Heart left ventricle (tissue), 16 donors: ENCODE measurements at regions of chr3 and their contacts with region 1.

Region 1: GRCh38 chr3:3200632-3201212 is 21.2 kb upstream of the CRBN start:
- DNase-seq: peak in 3 of 5 donors; percentile 19 to 53 (median 36)
- ATAC-seq: peak in 2 of 4 donors; percentile 59 to 80
- H3K4me3 ChIP-seq: no peak overlapping the region
- H3K27ac ChIP-seq: no peak overlapping the region
- H3K4me1 ChIP-seq: no peaks in the 10 kb centered on the region
- H3K27me3 ChIP-seq: peaks cover 0 to 8% (median 0%) of the 10 kb centered on the region in 9 donors
- CTCF ChIP-seq: peak; percentile 47 to 88 (median 73)
- POLR2A ChIP-seq: no peak

Region 2: GRCh38 chr3:2543247-2543646 is 657.5 kb before region 1 on chr3:
- intact Hi-C with region 1: no loop called
- DNase-seq: no peak
- ATAC-seq: no peak
- H3K4me3 ChIP-seq: no peak overlapping the region
- H3K27ac ChIP-seq: no peak overlapping the region
- H3K4me1 ChIP-seq: no peaks in the 10 kb centered on the region
- H3K27me3 ChIP-seq: no peaks in the 10 kb centered on the region
- CTCF ChIP-seq: no peak
- POLR2A ChIP-seq: no peak

Region 3: GRCh38 chr3:3998140-3998922 is 797.6 kb after region 1 on chr3:
- intact Hi-C with region 1: loop called (anchors 2 to 10 kb)
- DNase-seq: no peak
- ATAC-seq: no peak
- H3K4me3 ChIP-seq: no peak overlapping the region
- H3K27ac ChIP-seq: no peak overlapping the region
- H3K4me1 ChIP-seq: no peaks in the 10 kb centered on the region
- H3K27me3 ChIP-seq: no peaks in the 10 kb centered on the region
- CTCF ChIP-seq: peak; percentile 18 to 50 (median 42)
- POLR2A ChIP-seq: no peak

Region 4: DNA sequence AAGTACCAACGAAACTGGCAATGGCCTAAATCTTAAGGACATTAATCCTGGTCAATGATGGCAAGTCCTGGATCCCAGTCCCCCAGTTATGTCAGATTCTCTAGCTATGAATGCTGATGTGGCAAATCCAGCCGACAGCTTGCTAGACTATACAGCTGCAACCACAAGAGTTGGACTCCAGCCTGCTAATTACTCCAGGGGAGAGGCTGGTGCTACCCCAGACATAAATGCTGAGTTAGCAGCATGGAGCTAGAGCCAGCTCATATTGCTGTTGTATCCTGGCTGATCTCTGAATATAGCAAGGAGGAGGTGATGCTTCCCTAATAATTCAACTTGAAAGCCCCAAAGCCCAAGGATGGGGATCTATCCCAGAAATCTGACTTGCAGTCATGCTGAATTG is 805.6 kb after region 1 on chr3:
- intact Hi-C with region 1: loop called in 2 of 10 experiments (anchors 10 kb)
- DNase-seq: no peak
- ATAC-seq: no peak
- H3K4me3 ChIP-seq: no peak overlapping the region
- H3K27ac ChIP-seq: no peak overlapping the region
- H3K4me1 ChIP-seq: no peaks in the 10 kb centered on the region
- H3K27me3 ChIP-seq: no peaks in the 10 kb centered on the region
- CTCF ChIP-seq: no peak
- POLR2A ChIP-seq: no peak

Region 5: GRCh38 chr3:4271834-4272233 is 1071.1 kb after region 1 on chr3:
- intact Hi-C with region 1: loop called in 5 of 10 experiments (anchors 5 kb)
- DNase-seq: no peak
- ATAC-seq: no peak
- H3K4me3 ChIP-seq: no peak overlapping the region
- H3K27ac ChIP-seq: no peak overlapping the region
- H3K4me1 ChIP-seq: peaks cover 0 to 16% (median 0%) of the 10 kb centered on the region in 12 donors
- H3K27me3 ChIP-seq: no peaks in the 10 kb centered on the region
- CTCF ChIP-seq: peak in 11 of 12 donors; percentile 13 to 58 (median 39)
- POLR2A ChIP-seq: no peak

Region 6: GRCh38 chr3:4284865-4285264 is 1084.1 kb after region 1 on chr3:
- intact Hi-C with region 1: loop called (anchors 1 to 5 kb)
- DNase-seq: no peak
- ATAC-seq: no peak
- H3K4me3 ChIP-seq: no peak overlapping the region
- H3K27ac ChIP-seq: no peak overlapping the region
- H3K4me1 ChIP-seq: no peaks in the 10 kb centered on the region
- H3K27me3 ChIP-seq: no peaks in the 10 kb centered on the region
- CTCF ChIP-seq: no peak
- POLR2A ChIP-seq: no peak

Region 7: DNA sequence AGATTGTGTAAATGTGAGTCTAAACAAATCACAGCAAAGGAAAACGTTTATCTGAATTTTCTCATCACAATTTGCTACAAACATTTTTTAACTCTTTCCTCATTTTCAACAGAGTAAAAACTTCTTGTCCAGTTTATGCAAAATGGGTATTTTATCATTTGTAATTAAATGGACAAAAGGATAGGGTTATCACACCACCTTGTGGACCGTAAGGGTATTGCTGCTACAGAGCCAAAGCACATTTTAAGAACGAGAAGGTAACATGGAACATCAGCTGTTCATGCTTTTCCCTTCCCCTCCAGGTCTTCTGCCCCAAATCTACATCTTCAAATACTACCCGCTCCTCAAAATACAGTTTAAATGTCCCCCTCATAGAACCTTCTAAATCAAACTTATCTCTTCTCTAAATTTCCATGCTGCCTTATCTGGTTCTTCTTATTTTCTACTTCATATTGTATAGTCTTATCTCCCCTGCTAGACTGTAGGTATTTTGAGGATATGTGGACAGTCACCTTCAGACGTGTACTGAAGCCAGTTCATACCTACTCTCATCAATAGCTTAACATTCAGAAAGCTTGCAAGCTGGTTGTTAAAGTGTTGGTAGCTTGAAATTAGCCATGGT is 1089.7 kb after region 1 on chr3:
- intact Hi-C with region 1: loop called (anchors 1 to 5 kb)
- DNase-seq: no peak
- ATAC-seq: no peak
- H3K4me3 ChIP-seq: no peak overlapping the region
- H3K27ac ChIP-seq: no peak overlapping the region
- H3K4me1 ChIP-seq: no peaks in the 10 kb centered on the region
- H3K27me3 ChIP-seq: no peaks in the 10 kb centered on the region
- CTCF ChIP-seq: peak; percentile 89 to 97 (median 92)
- POLR2A ChIP-seq: no peak